A549 (cell line): ENCODE measurements at regions of chr1 and their contacts with region 1.

Region 1: GRCh38 chr1:206583707-206584648 is 28.3 kb downstream of the EIF2D start:
- DNase-seq: peak; percentile 62 to 72
- ATAC-seq: peak; percentile 79 to 92
- H3K4me3 ChIP-seq: no peak overlapping the region
- H3K27ac ChIP-seq: no peak overlapping the region
- H3K4me1 ChIP-seq: no peaks in the 10 kb centered on the region
- CTCF ChIP-seq: peak; percentile 94
- EP300 ChIP-seq: no peak
- POLR2A ChIP-seq: no peak
- RAD21 ChIP-seq: peak; percentile 86 to 93

Region 2: GRCh38 chr1:206479183-206480125 is 104.5 kb before region 1 on chr1:
- CTCF ChIA-PET with region 1: interaction called, 87 read pairs
- POLR2A ChIA-PET with region 1: no interaction called
- DNase-seq: peak; percentile 74 to 91
- ATAC-seq: peak; percentile 70 to 86
- H3K4me3 ChIP-seq: no peak overlapping the region
- H3K27ac ChIP-seq: no peak overlapping the region
- H3K4me1 ChIP-seq: peaks cover 11% of the 10 kb centered on the region
- CTCF ChIP-seq: peak; percentile 80
- EP300 ChIP-seq: no peak
- POLR2A ChIP-seq: no peak
- RAD21 ChIP-seq: peak; percentile 72 to 75

Region 3: DNA sequence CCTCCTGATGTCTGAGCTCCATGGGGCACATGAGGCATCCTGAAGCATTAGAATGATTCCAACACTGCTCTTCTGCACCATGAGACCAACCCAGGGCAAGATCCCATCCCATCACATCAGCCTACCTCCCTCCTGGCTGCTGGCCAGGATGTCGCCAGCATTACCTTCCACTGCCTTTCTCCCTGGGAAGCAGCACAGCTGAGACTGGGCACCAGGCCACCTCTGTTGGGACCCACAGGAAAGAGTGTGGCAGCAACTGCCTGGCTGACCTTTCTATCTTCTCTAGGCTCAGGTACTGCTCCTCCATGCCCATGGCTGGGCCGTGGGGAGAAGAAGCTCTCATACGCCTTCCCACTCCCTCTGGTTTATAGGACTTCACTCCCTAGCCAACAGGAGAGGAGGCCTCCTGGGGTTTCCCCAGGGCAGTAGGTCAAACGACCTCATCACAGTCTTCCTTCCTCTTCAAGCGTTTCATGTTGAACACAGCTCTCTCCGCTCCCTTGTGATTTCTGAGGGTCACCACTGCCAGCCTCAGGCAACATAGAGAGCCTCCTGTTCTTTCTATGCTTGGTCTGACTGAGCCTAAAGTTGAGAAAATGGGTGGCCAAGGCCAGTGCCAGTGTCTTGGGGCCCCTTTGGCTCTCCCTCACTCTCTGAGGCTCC is 87.7 kb before region 1 on chr1:
- CTCF ChIA-PET with region 1: interaction called, 188 read pairs
- POLR2A ChIA-PET with region 1: no interaction called
- DNase-seq: no peak
- ATAC-seq: no peak
- H3K4me3 ChIP-seq: no peak overlapping the region
- H3K27ac ChIP-seq: no peak overlapping the region
- H3K4me1 ChIP-seq: peaks cover 11% of the 10 kb centered on the region; the same call in 2 of the 3 replicates
- CTCF ChIP-seq: no peak
- EP300 ChIP-seq: no peak
- POLR2A ChIP-seq: no peak
- RAD21 ChIP-seq: no peak

Region 4: DNA sequence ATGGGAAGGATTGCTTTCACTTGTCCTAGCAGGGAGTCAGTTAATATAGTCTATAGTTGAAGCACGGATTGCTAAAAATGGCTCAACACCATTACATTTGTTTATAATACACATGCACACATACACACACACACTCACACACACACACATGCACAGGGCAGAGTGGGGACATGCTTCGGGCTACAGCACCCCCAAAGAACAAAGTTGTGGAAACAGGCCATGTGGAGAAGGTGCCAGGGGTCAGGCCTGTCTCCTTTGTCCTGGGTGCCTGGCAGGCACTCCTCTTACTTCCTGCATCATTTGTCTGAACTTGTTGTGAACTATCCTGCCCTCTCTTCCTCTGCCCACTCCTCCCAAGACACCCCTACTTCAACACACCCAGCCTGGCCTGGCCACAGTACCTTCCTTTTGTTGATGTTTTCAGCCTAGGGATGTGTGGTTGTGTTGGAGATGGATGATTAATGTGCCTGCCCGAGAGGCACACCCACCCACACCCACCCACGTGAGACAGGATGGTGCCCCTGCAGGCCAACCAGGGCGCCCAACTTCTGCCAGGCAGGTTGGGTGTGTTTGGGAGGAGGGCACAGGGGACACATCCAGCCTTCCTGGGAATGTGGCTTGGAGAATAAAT is 59.1 kb before region 1 on chr1:
- CTCF ChIA-PET with region 1: interaction called, 14 read pairs
- POLR2A ChIA-PET with region 1: no interaction called
- DNase-seq: peak in 1 of 2 experiments; percentile 52
- ATAC-seq: peak; percentile 55 to 74; a peak in 4 of 6 replicates
- H3K4me3 ChIP-seq: no peak overlapping the region
- H3K27ac ChIP-seq: no peak overlapping the region
- H3K4me1 ChIP-seq: peaks cover 5% of the 10 kb centered on the region; the same call in 1 of the 3 replicates
- CTCF ChIP-seq: no peak
- EP300 ChIP-seq: no peak
- POLR2A ChIP-seq: no peak
- RAD21 ChIP-seq: no peak

Region 5: GRCh38 chr1:206556750-206557635 is 27.0 kb before region 1 on chr1:
- CTCF ChIA-PET with region 1: interaction called, 59 read pairs
- POLR2A ChIA-PET with region 1: no interaction called
- DNase-seq: peak; percentile 25 to 51
- ATAC-seq: peak; percentile 77 to 88
- H3K4me3 ChIP-seq: peak overlapping the region; percentile 56
- H3K27ac ChIP-seq: peak overlapping the region; percentile 49 to 80; a peak in 5 of 6 replicates
- H3K4me1 ChIP-seq: peaks cover 17% of the 10 kb centered on the region
- CTCF ChIP-seq: no peak
- EP300 ChIP-seq: no peak
- POLR2A ChIP-seq: no peak
- RAD21 ChIP-seq: no peak

Region 6: DNA sequence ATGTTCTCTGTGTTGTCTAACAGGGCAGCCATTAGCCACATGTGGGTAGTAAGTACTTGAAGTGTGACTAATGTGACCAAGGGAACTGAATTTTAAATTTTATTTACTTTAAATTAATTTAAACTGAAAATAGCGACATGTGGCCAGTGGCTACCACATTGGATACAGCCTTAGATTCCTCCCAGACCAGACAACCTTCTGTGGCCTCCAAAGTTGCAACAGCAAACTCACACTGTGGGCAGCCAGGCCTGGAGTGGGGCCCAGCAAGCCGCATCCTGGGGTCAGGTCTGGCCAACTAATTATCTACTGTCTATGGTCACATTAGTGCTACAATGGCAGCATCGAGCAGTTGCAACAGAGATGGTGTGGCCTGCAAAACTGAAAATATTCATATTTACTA is 16.5 kb after region 1 on chr1:
- CTCF ChIA-PET with region 1: interaction called, 16 read pairs
- POLR2A ChIA-PET with region 1: no interaction called
- DNase-seq: no peak
- ATAC-seq: no peak
- H3K4me3 ChIP-seq: no peak overlapping the region
- H3K27ac ChIP-seq: no peak overlapping the region
- H3K4me1 ChIP-seq: no peaks in the 10 kb centered on the region
- CTCF ChIP-seq: no peak
- EP300 ChIP-seq: no peak
- POLR2A ChIP-seq: no peak
- RAD21 ChIP-seq: no peak

Region 7: GRCh38 chr1:206828765-206829164 is 244.8 kb after region 1 on chr1:
- CTCF ChIA-PET with region 1: no interaction called
- POLR2A ChIA-PET with region 1: no interaction called
- DNase-seq: no peak
- ATAC-seq: no peak
- H3K4me3 ChIP-seq: no peak overlapping the region
- H3K27ac ChIP-seq: no peak overlapping the region
- H3K4me1 ChIP-seq: no peaks in the 10 kb centered on the region
- CTCF ChIP-seq: no peak
- EP300 ChIP-seq: no peak
- POLR2A ChIP-seq: no peak
- RAD21 ChIP-seq: no peak

Region 8: GRCh38 chr1:206839857-206840256 is 255.9 kb after region 1 on chr1:
- CTCF ChIA-PET with region 1: no interaction called
- POLR2A ChIA-PET with region 1: no interaction called
- DNase-seq: peak in 1 of 2 experiments; percentile 7
- ATAC-seq: peak in 1 of 2 experiments; percentile 66; a peak in 3 of 6 replicates
- H3K4me3 ChIP-seq: no peak overlapping the region
- H3K27ac ChIP-seq: no peak overlapping the region
- H3K4me1 ChIP-seq: no peaks in the 10 kb centered on the region
- CTCF ChIP-seq: no peak
- EP300 ChIP-seq: no peak
- POLR2A ChIP-seq: no peak
- RAD21 ChIP-seq: no peak

Region 9: DNA sequence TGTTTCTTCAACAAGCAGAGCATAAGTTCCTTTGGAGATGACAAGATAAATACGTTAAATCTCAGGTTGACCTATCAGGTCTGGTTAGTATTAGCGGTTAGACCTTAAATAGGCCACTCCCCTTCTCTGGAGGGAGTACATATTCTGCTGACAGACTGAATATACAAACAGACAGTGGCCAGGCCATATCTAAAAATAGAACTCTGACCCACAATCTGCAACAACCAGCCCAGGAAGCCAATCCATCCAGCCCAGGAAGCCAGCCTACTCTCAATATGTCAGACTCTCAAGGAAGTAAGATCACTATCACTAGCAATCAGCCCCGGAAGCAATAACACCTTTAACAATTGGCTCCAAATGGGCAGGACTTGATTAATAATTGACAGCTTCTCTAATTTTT is 288.2 kb after region 1 on chr1:
- CTCF ChIA-PET with region 1: no interaction called
- POLR2A ChIA-PET with region 1: no interaction called
- DNase-seq: no peak
- ATAC-seq: no peak
- H3K4me3 ChIP-seq: no peak overlapping the region
- H3K27ac ChIP-seq: no peak overlapping the region
- H3K4me1 ChIP-seq: no peaks in the 10 kb centered on the region
- CTCF ChIP-seq: no peak
- EP300 ChIP-seq: no peak
- POLR2A ChIP-seq: no peak
- RAD21 ChIP-seq: no peak